Dendritic cell treated with granulocyte-macrophage colony-stimulating factor and Interleukin-4, amounts not matched to agents 40 ng/mL and 50 ng/mL, for 4 days (primary cell): ENCODE measurements at regions of chr16 and their contacts with region 1.

Region 1: DNA sequence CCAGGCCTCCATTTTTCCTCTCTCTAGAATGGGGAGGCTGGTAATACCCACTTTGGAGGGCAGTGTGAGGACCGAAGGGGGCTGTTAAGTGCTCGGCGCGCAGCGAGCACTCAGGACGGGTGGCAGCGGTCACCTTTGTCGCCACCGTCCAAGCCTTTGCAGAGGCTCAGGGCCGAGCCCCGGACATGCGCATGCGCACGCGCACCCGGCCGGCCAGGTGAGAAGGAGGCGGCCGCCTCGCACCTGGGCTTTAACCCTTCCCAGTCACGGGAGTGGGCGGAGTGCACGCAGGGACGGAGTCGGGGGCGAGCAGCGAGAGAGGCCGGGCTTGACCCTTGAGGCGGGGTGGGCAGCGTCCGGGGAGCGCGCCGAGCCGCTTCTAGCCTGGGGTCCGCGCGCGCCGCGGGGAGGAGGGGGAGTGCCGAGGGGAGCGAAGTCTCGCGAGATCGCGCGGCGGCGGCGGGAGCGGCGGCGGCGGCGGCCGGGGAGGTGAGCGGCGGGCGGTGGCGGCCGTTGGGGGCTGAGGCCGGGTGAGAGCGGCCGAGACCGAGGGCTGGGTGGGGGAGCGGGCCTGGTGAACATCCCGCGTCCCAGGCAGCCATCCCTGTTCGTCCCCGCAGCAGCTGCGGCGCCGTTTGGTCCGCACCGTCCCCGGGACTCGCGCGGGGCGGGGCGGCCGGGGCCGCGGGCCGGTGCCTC is at the start of gene MRTFB:
- H3K4me3 Mint-ChIP-seq: peak within 1 kb of the TSS; percentile 89
- H3K27ac Mint-ChIP-seq: peak within 1 kb of the TSS; percentile 87
- H3K4me1 Mint-ChIP-seq: peaks cover 11% of the 10 kb centered on the region
- H3K27me3 Mint-ChIP-seq: peaks cover 26% of the 10 kb centered on the region

Region 2: GRCh38 chr16:13931850-13932249 is 139.2 kb before region 1 on chr16:
- intact Hi-C with region 1: loop called (anchors 5 kb)
- H3K4me3 Mint-ChIP-seq: no peak overlapping the region
- H3K27ac Mint-ChIP-seq: no peak overlapping the region
- H3K4me1 Mint-ChIP-seq: peaks cover 18% of the 10 kb centered on the region
- H3K27me3 Mint-ChIP-seq: no peaks in the 10 kb centered on the region